Panc1 (cell line): ENCODE measurements at regions of chr1 and their contacts with region 1.

Region 1: GRCh38 chr1:233229288-233229687 is 66.2 kb downstream of the PCNX2 start:
- DNase-seq: no peak
- ATAC-seq: no peak
- H3K4me3 ChIP-seq: no peak overlapping the region
- H3K27ac ChIP-seq: no peak overlapping the region
- H3K4me1 ChIP-seq: no peaks in the 10 kb centered on the region
- H3K27me3 ChIP-seq: no peaks in the 10 kb centered on the region
- CTCF ChIP-seq: no peak

Region 2: DNA sequence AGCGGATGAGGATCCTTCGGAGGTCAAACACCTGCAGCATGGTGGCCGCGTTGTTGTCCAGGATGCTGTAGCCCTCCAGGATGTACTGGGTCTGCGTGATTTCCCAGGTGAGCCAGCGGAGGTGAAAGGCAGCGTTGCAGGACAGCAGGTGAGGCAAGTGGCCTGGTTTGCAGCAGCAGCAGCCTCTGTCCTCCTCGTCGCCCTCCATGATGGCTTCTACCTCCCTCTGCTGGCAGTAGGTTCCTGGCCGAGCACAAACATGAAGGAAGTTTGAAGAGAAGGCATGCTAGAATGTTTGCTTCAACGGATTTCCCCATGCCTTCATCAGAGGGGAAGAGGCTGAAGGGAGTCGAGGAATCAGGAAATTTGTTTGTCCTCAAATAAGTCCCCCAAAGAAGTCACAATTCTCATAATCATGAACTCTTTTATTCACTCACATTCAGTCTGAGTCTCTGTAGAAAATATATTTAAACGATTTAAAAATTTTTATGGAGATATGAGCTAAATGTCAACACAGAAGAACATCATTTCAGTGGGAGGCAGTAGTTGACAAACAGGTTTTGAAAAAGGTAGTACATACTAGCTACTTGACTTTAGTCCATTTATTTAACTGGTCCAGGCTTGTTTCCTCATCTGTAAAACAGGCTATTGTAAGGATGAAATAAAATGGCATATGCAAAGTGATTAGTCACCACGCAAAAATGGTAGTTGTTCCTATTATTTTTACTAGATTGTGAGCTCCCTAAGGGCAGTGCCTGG is 204.0 kb before region 1 on chr1:
- CTCF ChIA-PET with region 1: no interaction called
- POLR2A ChIA-PET with region 1: no interaction called
- in situ Hi-C with region 1: no loop called
- intact Hi-C with region 1: loop called (anchors 1 kb)
- DNase-seq: peak; percentile 15
- ATAC-seq: peak; percentile 53; the same call in 1 of the 2 replicates
- H3K4me3 ChIP-seq: no peak overlapping the region
- H3K27ac ChIP-seq: no peak overlapping the region
- H3K4me1 ChIP-seq: no peaks in the 10 kb centered on the region
- H3K27me3 ChIP-seq: peaks cover 3% of the 10 kb centered on the region; the same call in 1 of the 2 replicates
- CTCF ChIP-seq: peak; percentile 66

Region 3: GRCh38 chr1:233197940-233198339 is 31.3 kb before region 1 on chr1:
- CTCF ChIA-PET with region 1: no interaction called
- POLR2A ChIA-PET with region 1: no interaction called
- in situ Hi-C with region 1: no loop called
- intact Hi-C with region 1: no loop called
- DNase-seq: no peak
- ATAC-seq: no peak
- H3K4me3 ChIP-seq: no peak overlapping the region
- H3K27ac ChIP-seq: no peak overlapping the region
- H3K4me1 ChIP-seq: no peaks in the 10 kb centered on the region
- H3K27me3 ChIP-seq: no peaks in the 10 kb centered on the region
- CTCF ChIP-seq: no peak

Region 4: DNA sequence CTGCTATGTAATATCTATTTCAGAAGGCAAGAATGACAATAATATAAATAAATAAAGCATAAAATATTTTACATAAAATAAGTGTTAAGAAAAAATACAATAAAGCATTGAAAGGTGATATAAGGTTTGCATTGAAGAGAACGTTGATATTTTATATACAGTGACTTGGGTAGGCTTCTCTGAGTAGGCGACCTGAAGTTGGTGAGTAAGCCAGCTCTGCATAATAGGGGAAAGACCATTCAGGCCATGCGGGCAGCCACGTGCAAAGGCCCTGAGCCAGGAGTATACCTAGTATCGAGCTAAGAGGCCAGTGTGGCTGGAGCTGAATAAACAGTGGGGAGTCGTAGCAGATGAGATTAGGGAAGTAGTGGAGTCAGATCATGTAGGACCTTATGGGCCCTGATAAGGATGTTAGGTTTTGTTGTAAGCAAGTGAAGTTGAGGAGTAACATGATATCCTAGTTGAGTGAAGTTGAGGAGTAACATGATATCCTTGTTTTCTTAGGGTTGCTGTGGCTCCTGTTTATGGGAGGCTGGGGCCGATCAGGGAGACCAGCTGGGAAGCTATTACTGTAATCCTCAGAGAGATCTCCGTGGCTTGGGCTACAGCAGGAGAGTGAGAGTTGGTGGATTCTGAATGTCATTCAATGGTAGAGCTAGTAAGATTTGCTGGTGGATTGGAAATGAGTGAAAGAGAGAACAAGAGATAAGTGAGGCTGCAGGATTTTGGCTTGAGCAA is 406.6 kb after region 1 on chr1:
- CTCF ChIA-PET with region 1: no interaction called
- POLR2A ChIA-PET with region 1: no interaction called
- in situ Hi-C with region 1: no loop called
- intact Hi-C with region 1: no loop called
- DNase-seq: no peak
- ATAC-seq: no peak
- H3K4me3 ChIP-seq: no peak overlapping the region
- H3K27ac ChIP-seq: no peak overlapping the region
- H3K4me1 ChIP-seq: no peaks in the 10 kb centered on the region
- H3K27me3 ChIP-seq: peaks cover 16% of the 10 kb centered on the region
- CTCF ChIP-seq: no peak